Vagina (tissue), 2 donors: ENCODE measurements at regions of chr7 and their contacts with region 1.

Region 1: GRCh38 chr7:90346336-90347125 is at the start of gene GTPBP10:
- DNase-seq: peak in 1 of 2 donors; percentile 93
- H3K4me3 ChIP-seq: peak within 1 kb of the TSS; percentile 55 to 73
- H3K27ac ChIP-seq: peak within 1 kb of the TSS; percentile 83
- H3K4me1 ChIP-seq: peaks cover 15% of the 10 kb centered on the region
- H3K27me3 ChIP-seq: no peaks in the 10 kb centered on the region
- CTCF ChIP-seq: peak; percentile 60 to 82 (median 70)
- POLR2A ChIP-seq: peak in 1 of 2 donors; percentile 15
- total RNA-seq, gene GTPBP10: 11.0 TPM

Region 2: DNA sequence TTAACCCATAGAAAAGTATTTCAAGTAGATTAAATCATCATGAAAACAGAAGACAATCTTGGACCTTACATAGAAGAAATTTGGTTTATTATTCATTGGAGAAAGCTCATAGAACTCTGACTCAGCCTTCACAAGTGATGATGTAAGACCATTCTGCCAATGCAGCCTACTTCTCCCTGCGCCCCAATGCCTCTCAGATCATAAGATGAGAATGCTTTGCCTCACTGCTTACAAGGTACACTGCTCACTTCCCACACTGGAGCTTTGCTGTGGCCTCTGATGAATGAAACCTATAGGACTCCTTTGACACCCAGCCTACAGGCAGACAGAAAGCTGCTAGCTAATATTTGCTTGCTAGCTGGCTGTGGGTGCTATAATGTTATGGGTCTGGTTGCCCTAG is 761.6 kb before region 1 on chr7:
- intact Hi-C with region 1: no loop called
- DNase-seq: no peak
- H3K4me3 ChIP-seq: no peak overlapping the region
- H3K27ac ChIP-seq: no peak overlapping the region
- H3K4me1 ChIP-seq: no peaks in the 10 kb centered on the region
- H3K27me3 ChIP-seq: no peaks in the 10 kb centered on the region
- CTCF ChIP-seq: no peak
- POLR2A ChIP-seq: no peak

Region 3: GRCh38 chr7:90178679-90179278 is 167.8 kb before region 1 on chr7:
- intact Hi-C with region 1: no loop called
- DNase-seq: no peak
- H3K4me3 ChIP-seq: no peak overlapping the region
- H3K27ac ChIP-seq: no peak overlapping the region
- H3K4me1 ChIP-seq: no peaks in the 10 kb centered on the region
- H3K27me3 ChIP-seq: no peaks in the 10 kb centered on the region
- CTCF ChIP-seq: no peak
- POLR2A ChIP-seq: no peak

Region 4: GRCh38 chr7:90403174-90404113 is 56.9 kb after region 1 on chr7 and contains the start of gene CLDN12:
- intact Hi-C with region 1: loop called (anchors 5 kb)
- DNase-seq: peak in 1 of 2 donors; percentile 96
- H3K4me3 ChIP-seq: peak within 1 kb of the TSS; percentile 62 to 83
- H3K27ac ChIP-seq: peak within 1 kb of the TSS; percentile 90
- H3K4me1 ChIP-seq: peaks cover 13% of the 10 kb centered on the region
- H3K27me3 ChIP-seq: no peaks in the 10 kb centered on the region
- CTCF ChIP-seq: no peak
- POLR2A ChIP-seq: no peak
- total RNA-seq, gene CLDN12: 21.4 TPM

Region 5: GRCh38 chr7:90424720-90425119 is 78.2 kb after region 1 on chr7:
- intact Hi-C with region 1: no loop called
- DNase-seq: no peak
- H3K4me3 ChIP-seq: no peak overlapping the region
- H3K27ac ChIP-seq: no peak overlapping the region
- H3K4me1 ChIP-seq: no peaks in the 10 kb centered on the region
- H3K27me3 ChIP-seq: no peaks in the 10 kb centered on the region
- CTCF ChIP-seq: no peak
- POLR2A ChIP-seq: no peak